Activated T-helper 1 cell treated with anti-CD3 and anti-CD28 coated beads, Interleukin-12 subunit alpha, Interleukin-12 subunit beta, Interleukin-2, Interleukin-4 antibody, amounts not matched to agents 30 ng/mL and 10 ng/mL and 1 ng/mL, durations not matched to agents 14 hours and 24 hours and 36 hours (primary cell): ENCODE measurements at regions of chr3 and their contacts with region 1.

Region 1: DNA sequence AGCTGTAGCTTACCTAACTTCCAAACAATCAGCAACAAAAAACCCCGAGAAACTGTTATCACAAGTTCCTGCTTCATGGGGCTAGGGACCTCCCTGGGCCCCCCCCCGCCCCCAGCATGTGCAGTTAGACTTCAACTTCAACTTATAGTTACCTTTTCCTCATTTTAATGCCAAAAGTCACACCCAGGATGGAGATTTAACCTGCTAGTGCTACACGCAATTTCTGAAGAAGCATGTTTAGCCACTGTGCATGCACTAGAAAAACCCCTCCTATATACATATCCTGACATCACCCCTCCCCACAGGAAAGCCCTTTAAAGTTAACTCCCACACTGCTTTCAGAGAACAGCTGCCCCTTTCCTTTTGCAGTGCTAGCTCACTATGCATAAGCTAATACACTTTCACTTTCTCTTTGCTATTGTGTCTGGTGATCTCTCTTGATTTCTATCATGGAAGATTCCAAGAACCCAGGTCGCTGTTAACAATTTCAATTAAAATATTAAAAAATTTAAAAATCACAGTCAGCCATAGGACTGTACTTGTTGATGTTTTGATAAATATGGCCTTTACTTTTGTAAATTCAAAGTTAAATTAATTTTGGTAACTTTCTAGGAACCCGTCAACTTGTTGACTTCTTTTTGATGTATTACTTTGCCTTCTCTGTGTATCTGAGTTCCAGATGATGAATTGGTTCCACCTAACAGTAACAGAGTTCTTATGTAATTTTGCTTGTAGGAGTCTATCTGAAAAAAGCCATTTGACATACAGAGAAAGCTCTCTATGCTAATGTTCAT is 75.2 kb upstream of the ACAD9 start:
- DNase-seq: peak; percentile 77
- H3K4me3 Mint-ChIP-seq: peak overlapping the region; percentile 66
- H3K27ac Mint-ChIP-seq: peak overlapping the region; percentile 95
- H3K4me1 Mint-ChIP-seq: peaks cover 82% of the 10 kb centered on the region
- H3K27me3 Mint-ChIP-seq: no peaks in the 10 kb centered on the region

Region 2: DNA sequence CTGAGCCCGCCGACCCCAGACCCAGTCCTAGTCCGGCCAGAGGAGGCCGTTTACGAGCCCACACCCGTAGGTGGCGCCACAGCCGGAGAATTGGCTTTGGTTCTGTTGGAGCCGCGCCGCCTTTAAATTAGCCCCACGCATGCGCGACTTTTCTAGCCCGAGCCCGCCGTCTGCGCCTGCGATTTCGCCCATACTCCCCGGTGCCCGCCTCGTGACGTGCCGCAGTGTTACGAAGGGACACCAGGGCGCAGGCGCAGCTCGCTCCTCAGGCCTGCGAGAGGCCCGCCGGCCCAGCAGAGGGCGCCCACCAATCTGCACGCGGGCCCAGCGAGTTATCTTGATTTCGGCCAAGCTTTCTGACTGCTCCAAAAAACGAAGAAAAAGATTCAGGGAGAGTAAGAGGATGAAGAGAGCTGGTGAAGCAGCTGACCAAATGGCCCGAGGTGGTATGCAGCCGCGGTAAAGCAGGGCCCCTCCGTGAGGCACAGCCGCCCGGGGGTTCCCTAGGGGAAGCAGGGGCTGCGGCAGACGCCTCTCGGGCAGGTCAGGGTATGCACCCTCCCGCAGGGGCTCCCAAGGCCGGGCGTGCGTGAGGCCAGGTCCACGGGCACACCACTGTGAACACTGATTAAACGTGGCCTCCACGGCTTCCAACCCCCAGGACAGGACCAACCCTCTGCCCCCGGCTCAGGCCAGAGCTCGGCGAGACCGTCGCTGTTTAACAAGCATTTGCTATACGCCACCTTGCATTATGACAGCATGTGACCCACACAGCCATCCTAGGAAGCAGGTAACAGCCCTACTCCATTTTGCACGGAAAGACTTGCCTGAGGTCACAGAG is 186.4 kb before region 1 on chr3:
- intact Hi-C with region 1: loop called (anchors 1 kb)
- DNase-seq: peak; percentile 98
- H3K4me3 Mint-ChIP-seq: peak overlapping the region; percentile 98
- H3K27ac Mint-ChIP-seq: peak overlapping the region; percentile 97
- H3K4me1 Mint-ChIP-seq: peaks cover 29% of the 10 kb centered on the region
- H3K27me3 Mint-ChIP-seq: no peaks in the 10 kb centered on the region

Region 3: GRCh38 chr3:128725932-128726690 is 78.1 kb before region 1 on chr3 and contains the start of gene RAB7A:
- intact Hi-C with region 1: loop called (anchors 1 kb)
- DNase-seq: peak; percentile 94
- H3K4me3 Mint-ChIP-seq: peak within 1 kb of the TSS; percentile 99
- H3K27ac Mint-ChIP-seq: peak within 1 kb of the TSS; percentile 93
- H3K4me1 Mint-ChIP-seq: peaks cover 56% of the 10 kb centered on the region
- H3K27me3 Mint-ChIP-seq: no peaks in the 10 kb centered on the region
- total RNA-seq, gene RAB7A: 318 and 329 TPM in 2 replicates

Region 4: DNA sequence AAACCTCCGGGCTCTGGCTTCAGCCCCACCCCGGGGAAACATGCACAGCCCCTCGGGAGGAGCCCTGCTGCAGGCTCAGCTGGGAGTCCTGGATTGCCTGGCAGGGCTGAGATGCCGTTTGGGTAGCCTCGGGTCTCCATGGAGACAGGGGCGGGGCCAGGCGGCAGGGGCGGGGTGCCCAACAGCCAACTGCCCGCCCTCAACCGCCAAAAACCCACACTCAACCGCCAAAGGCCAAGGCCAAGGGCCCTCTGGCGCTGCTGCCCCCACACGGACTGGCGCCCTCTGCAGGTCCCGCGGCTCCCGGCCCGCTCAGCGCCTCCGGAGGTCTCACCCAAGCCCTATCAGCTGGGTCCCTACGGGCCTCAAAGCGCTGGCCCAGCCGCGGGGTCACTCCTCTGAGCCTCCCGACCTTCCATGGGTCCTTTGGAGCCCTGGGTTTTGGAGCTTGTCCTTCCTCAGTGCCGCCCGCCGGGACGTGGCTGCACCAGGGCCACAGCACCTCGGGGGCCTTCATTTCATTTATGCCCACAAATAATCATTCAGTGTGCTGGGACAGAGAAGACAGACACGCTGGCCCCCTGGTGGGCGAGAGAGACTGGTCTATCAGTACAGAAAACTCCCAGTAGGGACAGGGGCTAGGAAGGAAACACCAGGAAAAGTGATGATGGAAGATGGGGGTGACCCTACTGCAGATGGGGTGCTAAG is 41.7 kb after region 1 on chr3:
- intact Hi-C with region 1: loop called (anchors 1 kb)
- DNase-seq: peak; percentile 75
- H3K4me3 Mint-ChIP-seq: peak overlapping the region; percentile 77
- H3K27ac Mint-ChIP-seq: peak overlapping the region; percentile 90
- H3K4me1 Mint-ChIP-seq: peaks cover 18% of the 10 kb centered on the region
- H3K27me3 Mint-ChIP-seq: no peaks in the 10 kb centered on the region

Region 5: DNA sequence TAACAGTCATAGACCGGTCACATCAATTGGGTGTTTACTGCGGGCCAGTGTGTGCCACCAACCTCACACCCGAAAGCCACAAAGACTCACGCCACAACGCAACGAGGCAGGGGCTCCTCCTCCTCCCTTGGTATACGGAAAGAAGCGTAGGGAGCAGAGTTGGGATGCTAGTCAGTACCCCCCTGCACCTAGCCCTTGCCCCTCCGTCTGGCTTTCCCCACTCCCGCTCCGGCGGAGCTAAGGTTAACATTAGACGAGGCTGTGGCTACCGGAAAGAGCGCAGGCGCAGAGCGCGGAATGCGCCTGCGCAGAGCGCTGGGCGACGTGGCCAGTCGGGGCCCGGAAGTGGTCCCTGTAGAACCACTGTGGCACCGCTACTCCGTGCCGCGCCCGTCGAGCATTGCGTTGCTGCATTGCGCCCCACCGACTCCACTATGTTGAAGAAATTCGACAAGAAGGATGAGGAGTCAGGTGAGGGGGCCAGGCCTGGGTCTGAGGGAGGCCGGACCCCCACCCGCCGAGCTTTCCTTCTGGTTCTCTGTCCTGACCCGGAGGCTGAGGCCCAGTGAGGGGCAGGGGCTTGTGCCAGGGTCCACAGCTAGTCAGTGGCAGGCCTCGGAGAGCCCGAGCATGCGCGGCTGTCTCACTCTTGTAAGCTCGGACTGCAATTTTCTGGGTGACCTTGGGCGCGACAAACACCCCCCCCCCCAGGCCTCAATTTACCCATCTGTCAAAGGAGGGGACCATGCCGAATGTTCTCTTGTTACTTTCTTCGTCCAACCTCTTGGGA is 445.3 kb after region 1 on chr3 and contains the start of gene COPG1:
- intact Hi-C with region 1: loop called (anchors 5 kb)
- DNase-seq: peak; percentile 88
- H3K4me3 Mint-ChIP-seq: peak within 1 kb of the TSS; percentile 98
- H3K27ac Mint-ChIP-seq: peak within 1 kb of the TSS; percentile 98
- H3K4me1 Mint-ChIP-seq: peaks cover 61% of the 10 kb centered on the region
- H3K27me3 Mint-ChIP-seq: no peaks in the 10 kb centered on the region
- total RNA-seq, gene COPG1: 157 and 160 TPM in 2 replicates